ENCODE measurements at regions of chr22 and their contacts with region 1.

Region 1: DNA sequence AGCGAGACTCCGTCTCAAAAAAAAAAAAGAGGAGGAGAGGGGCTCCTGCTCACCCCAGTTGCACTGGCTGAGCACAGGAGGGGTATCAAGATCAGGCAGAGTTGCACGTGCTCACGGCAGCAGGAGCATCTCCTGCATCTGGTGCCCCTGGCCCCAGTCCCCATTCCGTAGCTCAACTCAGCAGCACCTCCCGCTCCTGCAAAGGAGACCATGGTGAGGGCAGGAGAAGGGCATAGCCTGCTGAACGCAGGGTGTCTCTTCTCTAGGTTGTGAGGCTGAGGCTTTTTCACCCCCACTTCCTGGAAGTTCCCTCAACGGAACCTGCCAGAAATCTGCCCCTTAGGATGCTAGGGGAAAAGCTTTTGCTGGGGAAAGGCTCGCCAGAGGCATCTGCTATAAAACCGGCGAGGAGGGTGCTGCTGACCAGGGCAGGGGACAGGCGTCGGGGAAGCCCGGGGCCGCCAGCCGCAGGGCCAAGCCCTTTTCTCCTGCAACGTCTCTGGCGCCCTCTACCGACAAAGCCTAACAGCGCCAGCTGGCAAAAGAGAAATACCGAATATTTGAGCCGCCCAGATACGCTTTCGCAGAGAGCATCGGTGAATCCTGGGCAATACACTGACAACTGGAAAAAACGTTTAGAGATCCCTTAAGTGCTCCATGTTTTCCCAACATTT is 1.0 kb upstream of the PPP6R2 start:
- DNase-seq: peak; percentile 91
- ATAC-seq: peak; percentile 52
- H3K4me3 ChIP-seq: peak overlapping the region; percentile 33 to 78 (median 74)
- H3K4me3 Mint-ChIP-seq: peak overlapping the region; percentile 90
- H3K27ac ChIP-seq: peak overlapping the region; percentile 51 to 81
- H3K27ac Mint-ChIP-seq: peak overlapping the region; percentile 82
- H3K4me1 ChIP-seq: peaks cover 16 to 21% of the 10 kb centered on the region in 2 donors
- H3K4me1 Mint-ChIP-seq: peaks cover 10% of the 10 kb centered on the region
- H3K27me3 ChIP-seq: no peaks in the 10 kb centered on the region
- H3K27me3 Mint-ChIP-seq: no peaks in the 10 kb centered on the region
- CTCF ChIP-seq: peak; percentile 94

Region 2: GRCh38 chr22:50250555-50251476 is 91.3 kb before region 1 on chr22 and contains the start of gene HDAC10:
- CTCF ChIA-PET with region 1: interaction called, 49 read pairs
- POLR2A ChIA-PET with region 1: interaction called, 4 read pairs
- intact Hi-C with region 1: loop called (anchors 1 kb)
- DNase-seq: peak; percentile 85
- ATAC-seq: peak; percentile 84
- H3K4me3 ChIP-seq: peak within 1 kb of the TSS; percentile 56 to 81 (median 79)
- H3K4me3 Mint-ChIP-seq: peak within 1 kb of the TSS; percentile 86
- H3K27ac ChIP-seq: peak within 1 kb of the TSS; percentile 41 to 49
- H3K27ac Mint-ChIP-seq: peak within 1 kb of the TSS; percentile 76
- H3K4me1 ChIP-seq: peaks cover 15 to 44% of the 10 kb centered on the region in 2 donors
- H3K4me1 Mint-ChIP-seq: peaks cover 24% of the 10 kb centered on the region
- H3K27me3 ChIP-seq: no peaks in the 10 kb centered on the region
- H3K27me3 Mint-ChIP-seq: no peaks in the 10 kb centered on the region
- CTCF ChIP-seq: no peak
- total RNA-seq, gene HDAC10: 120 and 136 TPM in 2 replicates

Region 3: DNA sequence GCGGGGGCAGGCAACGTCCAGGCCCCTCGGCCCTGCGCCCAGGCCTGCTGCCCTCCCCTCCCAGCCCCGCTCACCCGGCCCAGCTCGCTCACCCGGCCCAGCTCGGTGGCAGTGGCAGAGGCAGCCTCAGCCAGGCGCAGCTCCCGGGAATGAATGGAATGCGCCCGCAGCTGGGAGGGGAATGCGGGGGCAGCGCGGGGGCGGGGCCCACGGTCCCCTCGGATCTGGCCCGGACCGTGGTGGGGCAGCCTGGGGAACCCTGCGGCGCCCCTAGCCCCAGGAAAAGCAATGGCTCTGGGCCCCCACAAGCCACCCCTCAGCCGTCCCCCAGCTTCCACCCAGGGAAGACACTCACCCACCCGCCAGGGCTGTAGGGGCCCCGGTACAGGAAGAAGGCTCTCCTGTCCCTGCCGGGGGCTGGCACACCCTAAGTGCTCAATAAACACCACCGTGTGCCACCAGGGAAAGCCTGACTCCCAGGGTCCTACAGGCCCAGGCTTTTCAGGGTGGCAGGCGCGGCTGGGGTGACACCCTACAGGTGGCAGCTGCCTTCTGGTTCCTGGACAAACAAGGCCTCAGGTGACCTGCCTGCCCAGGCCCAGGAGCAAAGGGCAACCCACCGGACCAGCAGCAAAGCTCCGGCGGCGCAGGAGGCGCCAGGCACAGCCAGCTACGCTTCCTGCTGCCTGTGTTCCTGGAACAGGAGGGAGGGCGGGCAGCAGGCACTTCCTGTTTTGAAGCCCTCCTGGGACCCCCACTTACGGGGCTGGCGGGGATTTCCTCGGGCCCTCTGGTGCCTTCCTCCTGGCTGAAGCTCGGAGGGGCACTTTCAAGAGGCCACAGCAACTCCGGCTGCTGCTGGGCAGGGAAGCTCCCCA is 48.4 kb before region 1 on chr22:
- CTCF ChIA-PET with region 1: interaction called, 4 read pairs
- POLR2A ChIA-PET with region 1: no interaction called
- intact Hi-C with region 1: loop called (anchors 1 kb)
- DNase-seq: peak; percentile 73
- ATAC-seq: peak; percentile 58
- H3K4me3 ChIP-seq: peak overlapping the region in 1 of 5 experiments; percentile 33
- H3K4me3 Mint-ChIP-seq: peak overlapping the region; percentile 64
- H3K27ac ChIP-seq: no peak overlapping the region
- H3K27ac Mint-ChIP-seq: peak overlapping the region; percentile 46
- H3K4me1 ChIP-seq: peaks cover 37 to 44% of the 10 kb centered on the region in 2 donors
- H3K4me1 Mint-ChIP-seq: peaks cover 41% of the 10 kb centered on the region
- H3K27me3 ChIP-seq: peaks cover 0 to 32% (median 12%) of the 10 kb centered on the region in 4 experiments
- H3K27me3 Mint-ChIP-seq: peaks cover 17% of the 10 kb centered on the region
- CTCF ChIP-seq: no peak

Region 4: GRCh38 chr22:50444663-50445062 is 102.5 kb after region 1 on chr22:
- CTCF ChIA-PET with region 1: no interaction called
- POLR2A ChIA-PET with region 1: no interaction called
- intact Hi-C with region 1: no loop called
- DNase-seq: no peak
- ATAC-seq: no peak
- H3K4me3 ChIP-seq: no peak overlapping the region
- H3K4me3 Mint-ChIP-seq: no peak overlapping the region
- H3K27ac ChIP-seq: peak overlapping the region in 1 of 2 donors; percentile 68
- H3K27ac Mint-ChIP-seq: peak overlapping the region; percentile 75
- H3K4me1 ChIP-seq: peaks cover 10 to 20% of the 10 kb centered on the region in 2 donors
- H3K4me1 Mint-ChIP-seq: peaks cover 21% of the 10 kb centered on the region
- H3K27me3 ChIP-seq: no peaks in the 10 kb centered on the region
- H3K27me3 Mint-ChIP-seq: no peaks in the 10 kb centered on the region
- CTCF ChIP-seq: no peak

Region 5: DNA sequence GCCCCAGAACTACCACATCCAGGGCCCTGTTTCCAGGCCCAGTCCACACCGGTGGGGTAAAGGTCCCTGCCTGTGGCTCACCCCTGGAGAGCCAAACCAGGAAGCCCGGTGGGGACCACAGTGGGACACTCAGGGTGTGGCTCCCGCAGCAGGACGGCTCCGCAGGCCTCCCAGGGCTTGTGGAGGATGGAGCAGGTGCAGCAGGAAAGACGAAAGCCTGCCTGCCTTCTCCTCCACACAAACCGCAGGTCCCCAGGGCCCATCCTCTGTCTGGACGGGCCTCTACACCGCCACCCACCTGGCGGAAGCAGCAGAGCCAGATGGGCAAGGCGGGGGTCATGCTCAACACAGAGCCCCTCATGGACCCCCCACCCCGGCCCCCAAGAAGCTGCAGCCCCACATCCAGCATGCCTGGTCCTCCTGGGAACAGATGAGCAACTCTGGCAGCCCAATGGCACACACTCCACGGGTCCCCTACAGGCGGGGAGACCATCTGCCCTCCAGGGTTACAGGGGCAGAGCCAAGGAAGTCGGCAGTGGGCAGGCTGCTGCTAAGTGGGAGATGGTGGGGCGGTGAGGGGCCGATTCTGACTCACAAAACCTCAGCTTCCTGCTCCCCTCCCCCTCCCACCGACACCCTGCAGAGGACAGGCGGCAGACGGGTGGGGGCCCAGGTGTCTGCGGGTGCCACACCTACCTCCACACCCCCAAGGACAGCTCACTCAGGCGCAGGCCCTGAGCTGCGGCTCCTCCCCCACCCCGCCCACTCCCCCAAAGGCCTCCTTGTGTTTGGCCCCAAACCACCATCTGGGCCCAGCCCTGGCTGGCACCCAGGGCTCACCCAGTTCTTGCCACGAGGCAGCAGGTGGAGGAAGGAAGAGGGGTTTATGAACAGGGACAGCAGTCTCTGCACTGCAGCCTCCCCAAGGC is 127.5 kb after region 1 on chr22:
- CTCF ChIA-PET with region 1: interaction called, 5 read pairs
- POLR2A ChIA-PET with region 1: no interaction called
- intact Hi-C with region 1: loop called (anchors 1 kb)
- DNase-seq: peak; percentile 96
- ATAC-seq: peak; percentile 79
- H3K4me3 ChIP-seq: peak overlapping the region in 4 of 5 experiments; percentile 1 to 39 (median 29)
- H3K4me3 Mint-ChIP-seq: peak overlapping the region; percentile 83
- H3K27ac ChIP-seq: peak overlapping the region; percentile 69 to 90
- H3K27ac Mint-ChIP-seq: peak overlapping the region; percentile 96
- H3K4me1 ChIP-seq: peaks cover 60 to 66% of the 10 kb centered on the region in 2 donors
- H3K4me1 Mint-ChIP-seq: peaks cover 69% of the 10 kb centered on the region
- H3K27me3 ChIP-seq: no peaks in the 10 kb centered on the region
- H3K27me3 Mint-ChIP-seq: no peaks in the 10 kb centered on the region
- CTCF ChIP-seq: peak; percentile 31

Region 6: DNA sequence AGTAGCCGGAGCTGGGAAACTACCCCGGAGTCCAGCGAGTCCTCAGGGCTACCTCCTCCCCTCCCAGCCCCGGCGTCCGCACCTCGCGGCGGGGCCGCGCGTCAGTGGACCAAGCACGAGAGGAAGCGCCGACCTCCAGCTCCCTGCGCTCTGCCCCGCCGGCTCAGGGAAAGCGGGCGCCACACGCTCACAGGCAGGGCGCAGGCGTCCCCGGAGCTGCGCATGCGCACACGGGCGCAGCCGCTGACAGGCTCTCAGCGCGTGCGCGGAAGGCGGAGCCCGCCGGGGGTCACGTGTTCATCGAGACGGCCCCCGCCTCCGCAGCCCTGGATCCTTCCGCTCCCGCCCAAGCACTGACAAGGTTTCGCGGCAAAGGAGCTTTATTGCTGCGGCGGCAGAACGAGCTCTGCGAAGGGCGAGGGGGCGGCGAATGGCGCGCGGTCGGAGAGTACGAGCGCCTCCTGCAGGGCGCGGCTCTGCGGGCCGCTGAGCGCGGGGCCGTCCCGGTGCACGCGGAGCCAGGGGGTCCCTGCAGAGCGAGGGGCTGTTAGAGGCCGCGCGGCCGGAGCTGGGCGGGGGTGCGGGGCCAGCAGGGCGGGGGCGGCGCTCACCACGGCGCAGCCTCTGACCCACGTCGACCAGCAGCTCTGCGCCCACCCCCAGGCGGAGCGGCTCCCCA is 183.4 kb after region 1 on chr22 and contains the start of gene SCO2:
- CTCF ChIA-PET with region 1: interaction called, 15 read pairs
- POLR2A ChIA-PET with region 1: no interaction called
- intact Hi-C with region 1: no loop called
- DNase-seq: peak; percentile 98
- ATAC-seq: peak; percentile 54
- H3K4me3 ChIP-seq: peak within 1 kb of the TSS; percentile 4 to 82 (median 69)
- H3K4me3 Mint-ChIP-seq: peak within 1 kb of the TSS; percentile 90
- H3K27ac ChIP-seq: peak within 1 kb of the TSS; percentile 83 to 90
- H3K27ac Mint-ChIP-seq: peak within 1 kb of the TSS; percentile 91
- H3K4me1 ChIP-seq: peaks cover 16 to 52% of the 10 kb centered on the region in 2 donors
- H3K4me1 Mint-ChIP-seq: peaks cover 34% of the 10 kb centered on the region
- H3K27me3 ChIP-seq: no peaks in the 10 kb centered on the region
- H3K27me3 Mint-ChIP-seq: no peaks in the 10 kb centered on the region
- CTCF ChIP-seq: no peak
- total RNA-seq, gene SCO2: 1.1 TPM in 2 replicates